Aorta (tissue), 5 donors: ENCODE measurements at regions of chr2 and their contacts with region 1.

Region 1: GRCh38 chr2:200297989-200298388 is 8.5 kb upstream of the SPATS2L start:
- DNase-seq: no peak
- ATAC-seq: no peak
- H3K4me3 ChIP-seq: no peak overlapping the region
- H3K27ac ChIP-seq: no peak overlapping the region
- H3K4me1 ChIP-seq: peaks cover 0 to 2% of the 10 kb centered on the region in 2 donors
- H3K27me3 ChIP-seq: no peaks in the 10 kb centered on the region

Region 2: DNA sequence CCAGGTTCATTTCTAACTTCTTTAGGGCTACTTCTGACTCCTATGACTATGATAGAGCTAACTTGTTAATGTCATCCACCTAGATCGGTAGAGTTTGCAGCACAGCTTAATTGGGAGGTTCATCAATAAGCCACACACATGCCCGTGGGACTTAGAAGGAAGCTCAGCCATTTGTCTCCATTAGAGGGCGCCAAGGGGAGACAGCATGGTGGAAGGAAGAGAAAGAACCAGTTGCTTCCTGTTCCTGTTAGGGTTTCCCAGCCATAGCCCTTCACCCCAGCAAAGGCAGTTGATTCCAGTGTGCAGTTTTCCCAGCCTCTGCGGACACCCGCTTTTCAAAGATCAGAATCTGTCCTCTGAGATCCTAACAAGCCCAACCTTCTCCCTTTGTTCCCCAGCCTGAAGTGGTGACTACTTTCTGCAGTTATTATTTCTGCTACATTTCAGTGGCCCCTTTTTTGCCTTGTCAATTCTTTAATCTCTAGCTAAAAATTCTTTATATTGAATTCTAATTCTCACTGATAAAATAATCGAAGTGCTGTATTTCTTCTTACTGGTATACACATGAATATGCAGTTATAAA is 312.3 kb before region 1 on chr2:
- intact Hi-C with region 1: loop called in 1 of 2 experiments (anchors 10 kb)
- DNase-seq: peak in 1 of 2 donors; percentile 59
- ATAC-seq: no peak
- H3K4me3 ChIP-seq: no peak overlapping the region
- H3K27ac ChIP-seq: no peak overlapping the region
- H3K4me1 ChIP-seq: no peaks in the 10 kb centered on the region
- H3K27me3 ChIP-seq: no peaks in the 10 kb centered on the region

Region 3: GRCh38 chr2:200225951-200226350 is 72.0 kb before region 1 on chr2:
- intact Hi-C with region 1: no loop called
- DNase-seq: no peak
- ATAC-seq: no peak
- H3K4me3 ChIP-seq: no peak overlapping the region
- H3K27ac ChIP-seq: no peak overlapping the region
- H3K4me1 ChIP-seq: no peaks in the 10 kb centered on the region
- H3K27me3 ChIP-seq: no peaks in the 10 kb centered on the region

Region 4: DNA sequence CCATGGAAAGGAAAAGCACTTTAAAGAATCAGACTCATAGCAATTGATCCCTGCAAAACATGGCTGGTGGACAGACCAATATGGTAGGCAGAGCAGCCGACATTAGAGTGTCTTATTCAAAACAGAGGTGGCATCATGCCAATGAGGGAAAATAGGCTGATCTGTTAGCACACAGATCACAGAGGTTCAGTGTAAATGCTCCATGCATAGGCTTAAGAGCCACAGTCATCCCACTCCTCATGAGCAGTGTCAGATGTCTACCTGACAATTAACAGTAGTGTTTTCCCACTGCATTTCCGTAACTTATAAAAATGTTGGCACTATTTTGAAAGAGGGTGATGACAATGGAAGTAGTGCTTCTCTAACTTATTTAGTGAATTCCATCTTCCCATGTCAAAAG is 95.2 kb after region 1 on chr2:
- intact Hi-C with region 1: no loop called
- DNase-seq: no peak
- ATAC-seq: no peak
- H3K4me3 ChIP-seq: no peak overlapping the region
- H3K27ac ChIP-seq: no peak overlapping the region
- H3K4me1 ChIP-seq: no peaks in the 10 kb centered on the region
- H3K27me3 ChIP-seq: no peaks in the 10 kb centered on the region